ENCODE measurements at regions of chr14 and their contacts with region 1.

Region 1: DNA sequence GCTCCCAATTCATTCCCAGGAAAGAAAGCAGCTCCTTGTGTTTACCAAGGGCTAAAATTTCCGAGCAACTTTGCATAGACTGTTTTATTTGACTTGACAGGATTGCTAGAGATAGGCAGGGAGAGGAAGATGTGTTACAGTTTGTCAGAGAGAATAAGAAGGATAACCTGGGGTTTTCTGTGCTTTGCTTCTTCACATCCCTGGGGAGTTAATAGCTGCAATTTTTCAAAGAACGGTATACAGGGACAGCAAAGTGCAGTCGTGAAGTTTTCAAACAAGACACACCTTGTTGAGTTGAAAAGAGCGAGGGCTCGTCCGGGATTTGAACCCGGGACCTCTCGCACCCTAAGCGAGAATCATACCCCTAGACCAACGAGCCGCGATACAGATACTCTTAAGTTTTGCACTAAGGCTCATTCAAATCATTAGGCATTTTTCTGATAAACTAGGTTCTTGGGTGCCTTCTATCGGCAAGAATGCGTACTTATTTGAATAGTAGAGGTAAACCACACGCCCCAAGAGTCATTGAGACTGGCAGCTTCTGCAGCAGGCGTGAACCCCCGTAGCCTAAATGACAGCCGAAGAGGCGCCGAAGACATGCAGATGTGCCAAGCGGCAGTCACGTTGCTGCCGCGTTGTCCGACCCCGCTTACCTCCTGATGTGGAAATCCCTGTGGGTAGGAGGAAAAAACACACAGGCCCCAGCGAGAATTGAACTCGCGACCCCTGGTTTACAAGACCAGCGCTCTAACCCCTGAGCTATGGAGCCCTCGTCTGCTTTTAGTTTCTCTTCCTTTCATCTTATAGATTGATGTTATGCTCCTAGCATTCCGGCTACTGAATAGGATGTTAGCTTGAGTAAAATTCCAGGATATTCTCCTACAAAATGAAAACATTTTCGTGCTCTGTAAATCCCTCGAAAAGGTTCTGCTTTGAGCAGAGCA is 22.2 kb upstream of the RNASE12 start:
- DNase-seq: peak; percentile 88
- ATAC-seq: peak; percentile 87
- H3K4me3 Mint-ChIP-seq: no peak overlapping the region
- H3K27ac Mint-ChIP-seq: no peak overlapping the region
- H3K4me1 Mint-ChIP-seq: peaks cover 22% of the 10 kb centered on the region
- H3K27me3 Mint-ChIP-seq: peaks cover 16% of the 10 kb centered on the region

Region 2: DNA sequence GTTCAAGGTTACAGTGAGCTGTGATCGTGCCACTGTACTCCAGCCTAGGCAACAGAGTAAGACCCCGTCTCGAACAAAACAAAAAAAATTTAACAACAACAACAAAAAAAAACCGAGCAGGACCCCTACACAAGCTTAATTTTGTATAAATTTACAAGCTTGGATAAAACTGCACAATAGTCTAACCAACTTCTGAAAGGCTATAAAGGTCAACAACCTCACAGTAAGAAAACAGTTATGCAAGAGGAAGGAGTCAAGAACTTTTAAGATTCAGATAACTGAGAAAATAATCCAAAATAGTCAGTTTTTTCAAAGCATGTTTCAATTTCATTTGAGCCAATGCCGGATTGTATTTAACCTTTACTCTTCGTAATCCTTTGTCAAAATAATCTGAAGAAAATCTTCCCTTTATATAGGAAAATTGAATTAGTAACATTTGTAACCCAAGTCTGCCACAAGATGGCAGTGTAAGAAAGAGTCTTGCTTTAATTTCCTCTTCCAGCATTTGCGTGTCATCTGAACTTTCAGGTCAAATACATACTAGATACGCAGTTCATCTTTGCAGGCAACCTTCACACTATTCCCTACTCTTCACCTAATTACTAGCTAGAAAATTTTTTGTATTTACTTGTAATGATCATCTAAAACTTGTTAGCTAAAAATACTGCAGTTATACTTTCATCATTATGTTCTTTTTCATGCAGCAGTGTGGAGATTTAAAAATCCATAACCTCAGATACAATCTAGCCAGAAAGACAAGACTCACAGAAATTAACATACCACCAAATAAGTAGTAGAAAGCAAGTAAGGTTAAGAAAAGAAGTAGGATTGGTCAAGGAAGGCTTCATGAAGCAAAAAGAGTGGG is 286.1 kb before region 1 on chr14:
- CTCF ChIA-PET with region 1: interaction called, 151 read pairs
- POLR2A ChIA-PET with region 1: no interaction called
- DNase-seq: peak; percentile 52
- ATAC-seq: peak; percentile 65
- H3K4me3 Mint-ChIP-seq: no peak overlapping the region
- H3K27ac Mint-ChIP-seq: peak overlapping the region; percentile 13
- H3K4me1 Mint-ChIP-seq: peaks cover 42% of the 10 kb centered on the region
- H3K27me3 Mint-ChIP-seq: no peaks in the 10 kb centered on the region

Region 3: GRCh38 chr14:20343092-20343861 is 270.1 kb before region 1 on chr14 and contains the start of gene PARP2:
- CTCF ChIA-PET with region 1: interaction called, 10 read pairs
- POLR2A ChIA-PET with region 1: interaction called, 3 read pairs
- DNase-seq: peak; percentile 95
- ATAC-seq: peak; percentile 94
- H3K4me3 Mint-ChIP-seq: peak within 1 kb of the TSS; percentile 93
- H3K27ac Mint-ChIP-seq: peak within 1 kb of the TSS; percentile 98
- H3K4me1 Mint-ChIP-seq: peaks cover 20% of the 10 kb centered on the region
- H3K27me3 Mint-ChIP-seq: peaks cover 5% of the 10 kb centered on the region
- total RNA-seq, gene PARP2: 29.7 to 32.3 TPM

Region 4: DNA sequence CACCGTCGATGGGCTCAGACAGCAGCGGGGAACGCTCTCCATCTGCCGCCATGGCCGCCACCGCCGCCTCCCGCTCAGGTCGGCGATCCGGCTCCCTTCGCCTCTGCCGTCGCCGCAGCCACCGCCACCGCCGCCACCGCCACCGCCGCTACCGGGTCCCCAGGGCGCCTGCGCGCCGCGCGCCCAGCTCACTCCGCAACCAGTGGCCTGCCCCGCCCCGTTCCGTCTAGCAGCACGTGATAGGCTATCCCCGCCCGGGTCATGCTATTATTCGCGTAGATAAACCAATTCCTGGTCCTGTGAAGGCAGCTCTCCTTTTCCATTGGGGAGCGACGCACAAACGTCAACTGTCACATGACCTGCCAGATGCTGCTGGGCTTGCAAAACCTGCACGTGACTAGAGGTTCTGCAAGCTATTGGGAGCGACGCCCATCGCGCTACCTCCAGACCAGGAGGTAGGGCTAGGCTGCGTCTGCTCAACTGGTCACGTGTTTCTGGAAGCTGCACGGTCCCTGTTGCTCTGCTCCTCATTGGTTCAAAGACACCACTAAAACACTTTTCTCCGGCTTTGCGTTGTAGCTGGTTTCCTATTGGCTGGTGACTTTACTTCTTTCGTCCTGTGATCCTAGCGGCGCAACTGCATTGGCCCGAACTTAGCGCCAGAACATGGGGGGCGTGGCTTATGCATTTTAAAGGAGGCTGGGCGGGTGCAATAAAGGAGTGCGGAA is 151.9 kb before region 1 on chr14 and contains the start of gene PIP4P1:
- CTCF ChIA-PET with region 1: interaction called, 17 read pairs
- POLR2A ChIA-PET with region 1: no interaction called
- DNase-seq: peak; percentile 99
- ATAC-seq: peak; percentile 97
- H3K4me3 Mint-ChIP-seq: peak within 1 kb of the TSS; percentile 95
- H3K27ac Mint-ChIP-seq: peak within 1 kb of the TSS; percentile 91
- H3K4me1 Mint-ChIP-seq: peaks cover 38% of the 10 kb centered on the region
- H3K27me3 Mint-ChIP-seq: peaks cover 2% of the 10 kb centered on the region
- total RNA-seq, gene PIP4P1: 31.3 to 31.6 TPM

Region 5: GRCh38 chr14:20632682-20633428 is 19.5 kb after region 1 on chr14:
- CTCF ChIA-PET with region 1: interaction called, 22 read pairs
- POLR2A ChIA-PET with region 1: interaction called, 6 read pairs
- DNase-seq: peak; percentile 85
- ATAC-seq: peak; percentile 86
- H3K4me3 Mint-ChIP-seq: peak overlapping the region; percentile 72
- H3K27ac Mint-ChIP-seq: peak overlapping the region; percentile 79
- H3K4me1 Mint-ChIP-seq: peaks cover 37% of the 10 kb centered on the region
- H3K27me3 Mint-ChIP-seq: peaks cover 65% of the 10 kb centered on the region

Region 6: DNA sequence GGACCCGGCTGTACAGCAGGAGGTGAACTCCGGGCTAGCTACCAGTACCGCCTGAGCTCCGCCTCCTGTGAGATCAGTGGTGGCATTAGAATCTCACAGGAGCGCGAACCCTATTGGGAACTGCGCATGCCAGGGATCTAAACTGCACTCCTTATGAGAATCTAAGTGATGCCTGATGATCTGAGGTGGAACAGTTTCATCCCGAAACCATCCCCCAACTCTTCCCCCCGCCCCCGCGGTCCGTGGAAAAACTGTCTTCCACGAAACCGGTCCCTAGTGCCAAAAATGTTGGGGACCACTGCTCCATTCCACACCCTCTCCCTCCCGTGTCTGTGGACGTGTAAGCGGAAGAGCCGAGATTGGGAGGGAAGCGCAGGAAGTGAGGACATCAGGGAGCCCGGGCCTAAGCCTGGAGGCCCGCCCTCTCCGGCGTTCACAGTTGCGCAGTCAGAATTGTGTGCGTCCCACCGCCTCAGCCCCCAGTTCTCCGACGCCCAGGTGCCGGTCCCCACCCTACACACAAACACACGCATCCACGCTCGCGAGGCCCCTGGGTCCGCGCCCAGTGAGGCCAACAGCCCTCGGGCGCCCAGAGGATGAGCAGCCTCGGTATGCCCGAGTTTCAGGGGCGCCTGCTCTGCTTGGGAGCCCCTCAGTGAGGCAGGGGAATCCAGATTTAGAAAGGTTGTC is 69.2 kb after region 1 on chr14:
- CTCF ChIA-PET with region 1: interaction called, 20 read pairs
- POLR2A ChIA-PET with region 1: interaction called, 5 read pairs
- DNase-seq: peak; percentile 83
- ATAC-seq: peak; percentile 60
- H3K4me3 Mint-ChIP-seq: no peak overlapping the region
- H3K27ac Mint-ChIP-seq: no peak overlapping the region
- H3K4me1 Mint-ChIP-seq: peaks cover 14% of the 10 kb centered on the region
- H3K27me3 Mint-ChIP-seq: no peaks in the 10 kb centered on the region

Region 7: DNA sequence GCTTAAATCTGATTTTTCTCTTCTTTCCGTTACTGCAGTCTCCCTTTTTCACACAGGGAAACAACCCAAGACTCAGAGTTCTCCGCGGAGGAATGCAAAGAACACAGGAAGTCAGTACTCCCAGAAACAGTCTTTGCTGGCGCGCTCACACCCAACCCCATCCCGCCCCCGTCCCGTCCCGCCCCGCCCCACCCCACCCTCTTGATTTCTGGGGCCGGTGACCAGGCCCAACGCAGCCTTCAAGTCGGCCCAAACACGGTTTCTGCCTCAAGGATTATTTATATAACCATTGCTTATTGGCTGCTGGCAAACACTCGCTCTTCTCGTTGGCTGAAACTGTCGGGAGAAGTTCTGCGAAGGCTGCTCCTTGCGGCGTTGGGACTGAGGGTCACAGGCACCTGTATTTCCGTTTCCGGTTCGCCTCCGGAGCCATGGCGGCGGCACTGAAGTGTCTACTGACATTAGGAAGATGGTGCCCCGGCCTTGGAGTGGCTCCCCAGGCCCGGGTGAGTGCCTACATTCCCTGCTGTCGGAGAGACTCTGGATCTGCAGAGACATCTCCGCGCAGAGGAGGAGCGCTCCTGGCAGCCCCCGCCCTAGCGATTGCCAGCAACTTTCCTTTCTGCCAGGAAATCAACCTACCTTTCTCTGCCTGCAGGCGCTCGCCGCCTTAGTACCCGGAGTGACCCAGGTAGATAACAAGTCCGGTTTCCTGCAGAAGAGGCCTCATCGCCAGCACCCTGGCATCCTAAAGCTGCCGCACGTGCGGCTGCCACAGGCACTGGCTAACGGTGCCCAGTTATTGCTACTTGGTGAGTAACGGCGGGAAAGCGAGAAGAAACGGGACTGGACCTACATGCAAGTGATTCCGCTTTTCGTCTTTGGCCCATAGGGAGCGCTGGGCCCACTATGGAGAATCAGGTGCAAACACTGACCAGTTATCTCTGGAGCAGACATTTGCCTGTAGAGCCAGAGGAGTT is 376.5 kb after region 1 on chr14 and contains the start of gene METTL17:
- CTCF ChIA-PET with region 1: no interaction called
- POLR2A ChIA-PET with region 1: no interaction called
- DNase-seq: peak; percentile 94
- ATAC-seq: peak; percentile 97
- H3K4me3 Mint-ChIP-seq: peak within 1 kb of the TSS; percentile 92
- H3K27ac Mint-ChIP-seq: peak within 1 kb of the TSS; percentile 90
- H3K4me1 Mint-ChIP-seq: peaks cover 41% of the 10 kb centered on the region
- H3K27me3 Mint-ChIP-seq: no peaks in the 10 kb centered on the region
- total RNA-seq, gene METTL17: 97.5 to 103 TPM